Left ventricle myocardium inferior (tissue), 1 donor: ENCODE measurements at regions of chr16 and their contacts with region 1.

Region 1: GRCh38 chr16:18969050-18969854 is 14.5 kb upstream of the TMC7 start:
- DNase-seq: peak; percentile 89
- H3K4me3 ChIP-seq: peak overlapping the region; percentile 56
- H3K27ac ChIP-seq: no peak overlapping the region
- H3K4me1 ChIP-seq: peaks cover 5% of the 10 kb centered on the region
- H3K27me3 ChIP-seq: no peaks in the 10 kb centered on the region
- CTCF ChIP-seq: peak; percentile 95

Region 2: GRCh38 chr16:18841833-18842525 is 127.3 kb before region 1 on chr16:
- intact Hi-C with region 1: no loop called
- DNase-seq: no peak
- H3K4me3 ChIP-seq: no peak overlapping the region
- H3K27ac ChIP-seq: no peak overlapping the region
- H3K4me1 ChIP-seq: no peaks in the 10 kb centered on the region
- H3K27me3 ChIP-seq: no peaks in the 10 kb centered on the region
- CTCF ChIP-seq: no peak

Region 3: DNA sequence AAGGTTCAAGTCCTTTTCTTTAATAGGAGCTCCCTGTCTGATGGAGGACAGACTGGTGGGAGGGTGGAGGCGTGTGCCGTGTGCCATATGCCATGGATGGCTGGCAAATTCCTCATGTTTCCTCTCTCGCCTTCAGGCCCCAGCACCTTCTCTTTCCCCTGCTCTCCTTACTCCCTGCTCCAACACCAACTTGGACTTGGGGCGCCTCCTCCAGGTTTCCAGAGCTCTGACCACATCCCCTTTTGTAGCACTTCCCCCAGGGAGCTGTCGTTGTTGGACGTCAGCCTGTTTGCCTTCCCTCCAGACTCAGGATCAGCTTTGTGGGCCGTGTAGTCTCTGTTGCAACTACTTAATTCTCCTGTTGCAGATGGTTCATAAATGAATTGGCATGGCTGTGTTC is 45.2 kb after region 1 on chr16:
- intact Hi-C with region 1: no loop called
- DNase-seq: no peak
- H3K4me3 ChIP-seq: no peak overlapping the region
- H3K27ac ChIP-seq: no peak overlapping the region
- H3K4me1 ChIP-seq: no peaks in the 10 kb centered on the region
- H3K27me3 ChIP-seq: no peaks in the 10 kb centered on the region
- CTCF ChIP-seq: no peak

Region 4: DNA sequence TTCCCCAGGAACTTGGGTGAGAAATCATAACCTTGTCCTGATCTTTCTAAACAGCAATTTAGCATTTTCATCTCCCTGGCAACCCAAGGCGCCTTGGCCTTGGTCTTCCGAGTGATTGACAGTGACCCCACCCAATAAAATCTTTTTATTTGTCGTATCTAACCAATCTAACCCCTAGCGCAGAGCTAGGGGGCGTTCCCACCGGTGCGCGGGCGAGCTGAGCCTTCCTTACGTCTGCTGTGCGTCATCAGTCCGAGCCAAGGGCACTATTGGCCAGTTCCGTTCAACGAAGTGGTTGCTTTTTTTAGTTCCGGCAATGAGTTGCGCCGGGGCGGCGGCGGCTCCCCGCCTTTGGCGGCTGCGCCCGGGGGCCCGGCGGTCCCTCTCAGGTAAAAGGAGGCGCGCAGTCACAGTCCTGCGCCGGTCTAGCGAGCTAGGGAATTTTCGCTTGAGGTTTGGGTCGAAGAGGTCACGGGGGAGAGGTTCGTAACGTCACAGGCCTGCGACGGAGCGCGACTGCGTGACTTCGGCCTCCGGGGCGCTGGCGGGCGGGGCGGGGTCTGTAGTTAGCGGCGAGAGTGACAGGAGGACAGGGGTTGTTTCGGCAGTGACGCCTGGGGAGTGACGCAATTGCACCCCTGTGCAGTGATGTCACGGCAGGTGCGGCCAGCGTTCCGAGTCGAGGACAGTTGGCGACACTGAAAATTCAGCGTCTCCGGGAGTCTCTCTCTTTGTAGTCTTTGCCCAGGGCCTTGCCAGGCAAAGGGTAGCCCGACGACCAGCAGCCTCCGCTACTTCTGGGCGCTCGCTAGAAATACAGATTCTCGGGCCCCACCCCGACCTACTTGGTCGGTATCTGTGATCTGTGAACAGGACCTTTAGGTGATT is 98.3 kb after region 1 on chr16 and contains the start of gene COQ7:
- intact Hi-C with region 1: loop called (anchors 10 kb)
- DNase-seq: peak; percentile 98
- H3K4me3 ChIP-seq: peak within 1 kb of the TSS; percentile 82
- H3K27ac ChIP-seq: peak within 1 kb of the TSS; percentile 100
- H3K4me1 ChIP-seq: peaks cover 29% of the 10 kb centered on the region
- H3K27me3 ChIP-seq: no peaks in the 10 kb centered on the region
- CTCF ChIP-seq: no peak
- total RNA-seq, gene COQ7: 45.4 TPM